Heart right ventricle (tissue), 16 donors: ENCODE measurements at regions of chr1 and their contacts with region 1.

Region 1: GRCh38 chr1:232630047-232630893 is at the start of gene SIPA1L2:
- DNase-seq: peak; percentile 94 to 97
- ATAC-seq: peak; percentile 95 to 98 (median 96)
- H3K4me3 ChIP-seq: peak within 1 kb of the TSS; percentile 57 to 98 (median 86)
- H3K27ac ChIP-seq: peak within 1 kb of the TSS; percentile 63 to 96 (median 94)
- H3K4me1 ChIP-seq: peaks cover 4 to 52% (median 33%) of the 10 kb centered on the region in 9 donors
- H3K27me3 ChIP-seq: no peaks in the 10 kb centered on the region
- CTCF ChIP-seq: peak in 8 of 9 donors; percentile 17 to 71 (median 54)
- total RNA-seq, gene SIPA1L2: 64.9 to 141 (median 101) TPM

Region 2: GRCh38 chr1:231757101-231757404 is 873.2 kb before region 1 on chr1:
- intact Hi-C with region 1: loop called in 4 of 10 experiments (anchors 5 to 10 kb)
- DNase-seq: no peak
- ATAC-seq: peak in 5 of 8 donors; percentile 16 to 35 (median 31)
- H3K4me3 ChIP-seq: no peak overlapping the region
- H3K27ac ChIP-seq: no peak overlapping the region
- H3K4me1 ChIP-seq: peaks cover 0 to 6% (median 0%) of the 10 kb centered on the region in 9 donors
- H3K27me3 ChIP-seq: no peaks in the 10 kb centered on the region
- CTCF ChIP-seq: peak in 1 of 9 donors; percentile 28

Region 3: DNA sequence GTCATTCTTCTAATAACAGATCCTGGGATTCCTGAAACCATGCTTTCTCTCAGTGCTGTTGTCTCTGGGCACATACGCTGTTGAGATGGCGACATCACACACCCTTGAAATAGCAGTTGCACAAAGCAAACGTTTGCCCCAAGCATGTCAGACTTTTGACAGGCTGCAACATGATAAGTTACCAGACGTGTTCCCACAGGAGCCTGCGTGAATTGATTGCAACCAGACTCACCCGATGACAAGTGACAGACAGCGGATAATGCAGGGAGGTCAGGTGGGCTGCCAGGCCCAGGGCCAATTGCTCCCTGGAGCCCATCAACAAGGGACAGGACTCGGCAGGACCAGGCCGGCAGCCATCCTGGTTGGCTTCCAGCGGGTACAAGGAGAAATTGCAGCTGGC is 311.2 kb before region 1 on chr1:
- intact Hi-C with region 1: loop called in 3 of 10 experiments (anchors 2 to 10 kb)
- DNase-seq: peak; percentile 83 to 85
- ATAC-seq: peak; percentile 90 to 97 (median 95)
- H3K4me3 ChIP-seq: no peak overlapping the region
- H3K27ac ChIP-seq: peak overlapping the region; percentile 25 to 89 (median 78)
- H3K4me1 ChIP-seq: peaks cover 0 to 30% (median 3%) of the 10 kb centered on the region in 9 donors
- H3K27me3 ChIP-seq: no peaks in the 10 kb centered on the region
- CTCF ChIP-seq: no peak

Region 4: DNA sequence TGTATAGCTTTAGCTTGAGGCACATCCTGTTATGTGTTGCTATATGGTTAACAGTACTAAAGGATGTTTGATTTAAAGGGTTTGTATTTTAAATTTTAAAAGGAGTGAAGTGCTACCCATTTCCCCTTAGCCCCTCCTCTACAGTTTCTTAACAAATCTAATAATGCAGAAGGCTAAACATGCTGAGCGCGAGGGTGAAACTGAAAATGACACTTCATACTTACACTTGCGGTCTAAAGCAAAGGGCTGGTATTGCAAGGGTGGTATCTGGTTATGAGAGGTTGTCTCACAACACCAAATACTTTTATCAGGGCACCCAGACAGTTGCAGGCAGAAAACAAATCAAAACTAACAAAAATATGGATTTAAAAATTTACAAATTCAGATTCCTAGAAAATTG is 172.7 kb before region 1 on chr1:
- intact Hi-C with region 1: loop called in 2 of 10 experiments (anchors 10 kb)
- DNase-seq: no peak
- ATAC-seq: peak in 1 of 8 donors; percentile 26
- H3K4me3 ChIP-seq: no peak overlapping the region
- H3K27ac ChIP-seq: peak overlapping the region in 1 of 10 donors; percentile 9
- H3K4me1 ChIP-seq: peaks cover 0 to 56% (median 30%) of the 10 kb centered on the region in 9 donors
- H3K27me3 ChIP-seq: no peaks in the 10 kb centered on the region
- CTCF ChIP-seq: no peak

Region 5: DNA sequence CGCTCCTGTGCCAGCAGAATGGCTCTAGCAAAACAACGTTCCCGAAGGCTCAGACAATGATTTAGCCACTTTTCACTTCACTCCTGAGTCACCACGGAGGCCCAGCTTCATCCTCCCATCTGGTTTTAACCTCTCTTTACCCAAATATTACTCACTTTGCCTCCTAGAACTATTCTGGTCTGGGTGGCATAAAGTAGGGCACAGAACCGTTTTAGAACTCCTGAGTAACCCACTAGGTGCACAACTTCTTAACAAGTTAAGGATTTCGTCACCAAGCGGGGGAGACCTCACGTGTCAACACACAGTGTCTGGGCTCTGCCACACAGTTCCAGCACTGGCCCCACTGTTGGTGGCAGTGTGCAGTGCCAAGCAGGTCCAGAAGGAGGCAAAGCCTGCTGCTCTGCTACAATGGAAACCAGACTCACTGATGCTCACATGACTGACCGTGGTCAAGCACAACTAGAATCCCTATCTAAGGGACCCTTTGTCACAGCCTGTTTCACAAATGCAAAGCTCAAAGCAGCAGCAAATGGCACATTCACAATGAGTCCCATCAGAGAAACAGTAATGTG is 122.1 kb before region 1 on chr1:
- intact Hi-C with region 1: loop called in 2 of 10 experiments (anchors 5 to 10 kb)
- DNase-seq: no peak
- ATAC-seq: peak in 5 of 8 donors; percentile 49 to 76 (median 63)
- H3K4me3 ChIP-seq: no peak overlapping the region
- H3K27ac ChIP-seq: peak overlapping the region in 5 of 10 donors; percentile 2 to 49 (median 15)
- H3K4me1 ChIP-seq: peaks cover 16 to 71% (median 46%) of the 10 kb centered on the region in 9 donors
- H3K27me3 ChIP-seq: no peaks in the 10 kb centered on the region
- CTCF ChIP-seq: peak in 5 of 9 donors; percentile 21 to 43 (median 34)

Region 6: GRCh38 chr1:232589812-232590743 is 40.2 kb before region 1 on chr1:
- intact Hi-C with region 1: loop called in 2 of 10 experiments (anchors 5 kb)
- DNase-seq: no peak
- ATAC-seq: peak in 7 of 8 donors; percentile 23 to 62 (median 53)
- H3K4me3 ChIP-seq: no peak overlapping the region
- H3K27ac ChIP-seq: peak overlapping the region in 9 of 10 donors; percentile 38 to 89 (median 66)
- H3K4me1 ChIP-seq: peaks cover 12 to 90% (median 68%) of the 10 kb centered on the region in 9 donors
- H3K27me3 ChIP-seq: no peaks in the 10 kb centered on the region
- CTCF ChIP-seq: no peak

Region 7: DNA sequence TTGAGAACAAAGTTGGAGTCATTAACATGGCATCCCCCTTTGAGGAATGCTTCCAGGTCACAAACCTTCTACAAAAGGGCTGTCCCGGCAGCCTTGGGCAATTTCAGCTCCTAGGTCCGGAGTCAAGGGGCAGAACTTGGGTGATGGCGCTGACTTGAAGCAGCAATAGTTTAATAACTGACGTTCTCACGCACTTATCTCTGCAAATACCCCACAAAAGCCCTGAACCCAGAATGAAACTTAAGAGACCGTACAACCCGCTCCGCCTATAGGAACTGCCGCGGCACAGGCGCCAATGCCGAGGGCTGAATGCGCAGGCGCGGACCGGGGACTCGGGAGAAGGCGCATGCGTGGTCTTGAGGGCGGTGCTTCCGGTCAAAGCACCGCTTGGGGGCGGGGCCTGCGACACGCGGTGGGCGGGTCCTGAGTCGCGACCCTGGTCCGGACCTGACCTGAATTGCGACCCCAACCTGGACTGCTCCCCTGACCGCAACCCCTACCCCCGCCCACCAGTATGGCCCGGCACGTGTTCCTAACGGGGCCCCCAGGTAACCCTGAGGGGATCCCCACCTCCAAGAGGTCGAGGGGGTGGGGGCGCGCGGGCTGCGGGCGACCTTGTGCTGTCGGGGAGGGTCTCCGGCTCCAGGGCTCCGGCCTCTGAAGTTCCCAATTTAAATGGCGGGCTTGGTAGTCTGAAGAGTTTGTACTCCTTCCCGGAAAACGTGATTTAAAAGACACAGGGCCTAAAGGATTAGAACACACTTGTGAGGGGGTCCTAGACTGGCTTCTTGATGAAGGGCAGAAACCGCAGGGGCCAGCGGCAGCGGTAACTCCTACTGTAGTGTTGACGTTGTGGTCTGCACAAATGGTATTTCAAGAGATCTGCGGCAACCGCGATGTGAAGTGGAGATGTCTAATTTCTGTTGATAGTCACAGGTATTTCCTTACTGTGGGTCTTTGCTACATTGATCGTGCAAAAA is 320.2 kb after region 1 on chr1 and contains the start of gene NTPCR:
- intact Hi-C with region 1: loop called in 9 of 10 experiments (anchors 5 to 10 kb)
- DNase-seq: peak; percentile 94 to 97
- ATAC-seq: peak; percentile 94 to 98 (median 98)
- H3K4me3 ChIP-seq: peak within 1 kb of the TSS; percentile 77 to 98 (median 86)
- H3K27ac ChIP-seq: peak within 1 kb of the TSS; percentile 40 to 93 (median 89)
- H3K4me1 ChIP-seq: peaks cover 0 to 34% (median 20%) of the 10 kb centered on the region in 9 donors
- H3K27me3 ChIP-seq: no peaks in the 10 kb centered on the region
- CTCF ChIP-seq: peak in 5 of 9 donors; percentile 5 to 45 (median 39)
- total RNA-seq, gene NTPCR: 53.5 to 78.8 (median 56.8) TPM